Activated CD8-positive, alpha-beta memory T cell treated with anti-CD3 and anti-CD28 coated beads, Interleukin-2, amount 10 ng/mL, durations not matched to agents 7 days and 5 days (primary cell): ENCODE measurements at regions of chr7 and their contacts with region 1.

Region 1: GRCh38 chr7:100705753-100706671 is at the start of gene POP7:
- DNase-seq: peak; percentile 99
- ATAC-seq: peak; percentile 95
- H3K4me3 Mint-ChIP-seq: peak within 1 kb of the TSS; percentile 94
- H3K27ac Mint-ChIP-seq: peak within 1 kb of the TSS; percentile 92
- H3K4me1 Mint-ChIP-seq: peaks cover 24% of the 10 kb centered on the region
- H3K27me3 Mint-ChIP-seq: peaks cover 5% of the 10 kb centered on the region
- total RNA-seq, gene POP7: 43.6 to 53.4 TPM

Region 2: GRCh38 chr7:100586266-100587025 is 119.6 kb before region 1 on chr7 and contains the start of gene FBXO24:
- CTCF ChIA-PET with region 1: interaction called, 18 read pairs
- DNase-seq: peak; percentile 100
- ATAC-seq: peak; percentile 84
- H3K4me3 Mint-ChIP-seq: peak within 1 kb of the TSS; percentile 98
- H3K27ac Mint-ChIP-seq: peak within 1 kb of the TSS; percentile 97
- H3K4me1 Mint-ChIP-seq: peaks cover 23% of the 10 kb centered on the region
- H3K27me3 Mint-ChIP-seq: peaks cover 7% of the 10 kb centered on the region
- total RNA-seq, gene FBXO24: 0.80 to 1.3 TPM

Region 3: DNA sequence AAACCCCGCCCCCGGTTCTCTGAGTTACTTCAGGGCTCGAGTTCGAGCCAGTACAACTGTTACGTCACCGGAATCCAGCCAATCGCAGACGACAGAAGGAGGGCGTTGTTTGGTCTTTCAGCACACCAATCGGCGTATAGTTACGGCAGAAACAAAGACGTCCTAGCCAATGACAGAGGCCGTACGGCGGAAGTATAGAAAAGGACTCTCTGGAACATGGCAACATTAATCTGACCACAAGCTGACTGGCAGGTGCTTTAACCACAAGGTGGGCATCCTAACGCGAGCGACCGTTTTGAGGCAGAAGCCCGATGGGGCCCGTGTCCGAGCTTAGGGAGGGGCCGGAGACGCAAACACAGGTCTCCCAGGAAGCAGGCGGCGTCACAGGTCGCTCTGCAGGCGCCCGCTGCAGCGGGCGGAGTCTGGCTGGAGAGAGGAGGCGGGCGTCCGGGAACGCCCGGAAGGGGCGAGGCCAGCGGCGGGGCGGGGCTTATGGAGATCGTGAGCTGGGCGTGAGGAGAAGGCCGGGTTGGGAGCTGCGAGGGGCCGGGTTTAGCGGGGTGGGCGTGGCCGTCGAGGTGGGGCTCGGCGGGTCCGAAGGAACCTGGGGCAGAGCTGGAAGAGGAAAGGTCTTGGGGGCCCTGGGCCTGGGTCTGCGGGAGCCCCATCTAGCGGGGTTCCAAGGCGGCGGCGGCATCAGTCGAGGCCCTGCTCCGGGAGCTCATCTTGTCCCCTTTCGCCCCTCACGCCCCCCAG is 93.9 kb before region 1 on chr7 and contains the start of gene MOSPD3:
- CTCF ChIA-PET with region 1: interaction called, 16 read pairs
- DNase-seq: peak; percentile 99
- ATAC-seq: peak; percentile 95
- H3K4me3 Mint-ChIP-seq: peak within 1 kb of the TSS; percentile 87
- H3K27ac Mint-ChIP-seq: peak within 1 kb of the TSS; percentile 100
- H3K4me1 Mint-ChIP-seq: peaks cover 22% of the 10 kb centered on the region
- H3K27me3 Mint-ChIP-seq: no peaks in the 10 kb centered on the region
- total RNA-seq, gene MOSPD3: 22.2 to 28.8 TPM

Region 4: GRCh38 chr7:100632951-100633717 is 72.9 kb before region 1 on chr7:
- CTCF ChIA-PET with region 1: interaction called, 15 read pairs
- DNase-seq: peak; percentile 79
- ATAC-seq: peak; percentile 82
- H3K4me3 Mint-ChIP-seq: peak overlapping the region; percentile 82
- H3K27ac Mint-ChIP-seq: peak overlapping the region; percentile 92
- H3K4me1 Mint-ChIP-seq: peaks cover 40% of the 10 kb centered on the region
- H3K27me3 Mint-ChIP-seq: no peaks in the 10 kb centered on the region

Region 5: GRCh38 chr7:100691676-100692577 is 14.1 kb before region 1 on chr7:
- CTCF ChIA-PET with region 1: interaction called, 137 read pairs
- DNase-seq: peak; percentile 86
- ATAC-seq: peak; percentile 76
- H3K4me3 Mint-ChIP-seq: peak overlapping the region; percentile 96
- H3K27ac Mint-ChIP-seq: peak overlapping the region; percentile 71
- H3K4me1 Mint-ChIP-seq: peaks cover 28% of the 10 kb centered on the region
- H3K27me3 Mint-ChIP-seq: peaks cover 13% of the 10 kb centered on the region

Region 6: GRCh38 chr7:100852048-100852872 is 146.2 kb after region 1 on chr7 and contains the start of gene SLC12A9:
- CTCF ChIA-PET with region 1: interaction called, 105 read pairs
- DNase-seq: peak; percentile 91
- ATAC-seq: peak; percentile 99
- H3K4me3 Mint-ChIP-seq: peak within 1 kb of the TSS; percentile 89
- H3K27ac Mint-ChIP-seq: peak within 1 kb of the TSS; percentile 67
- H3K4me1 Mint-ChIP-seq: peaks cover 21% of the 10 kb centered on the region
- H3K27me3 Mint-ChIP-seq: no peaks in the 10 kb centered on the region
- total RNA-seq, gene SLC12A9: 28.6 to 30.1 TPM